K562 (cell line): ENCODE measurements at regions of chr2 and their contacts with region 1.

Region 1: GRCh38 chr2:30711646-30712085 is 95.6 kb downstream of the CAPN13 start:
- DNase-seq: peak; percentile 78 to 91 (median 87)
- ATAC-seq: peak; percentile 90
- H3K4me3 ChIP-seq: no peak overlapping the region
- H3K27ac ChIP-seq: no peak overlapping the region
- H3K4me1 ChIP-seq: peaks cover 0 to 2% of the 10 kb centered on the region in 2 experiments; a peak in 1 of 5 replicates
- H3K27me3 ChIP-seq: peaks cover 4 to 25% of the 10 kb centered on the region in 2 experiments; a peak in 4 of 5 replicates
- CTCF ChIP-seq: peak; percentile 100
- EP300 ChIP-seq: no peak
- POLR2A ChIP-seq: no peak
- RAD21 ChIP-seq: peak; percentile 91 to 98

Region 2: DNA sequence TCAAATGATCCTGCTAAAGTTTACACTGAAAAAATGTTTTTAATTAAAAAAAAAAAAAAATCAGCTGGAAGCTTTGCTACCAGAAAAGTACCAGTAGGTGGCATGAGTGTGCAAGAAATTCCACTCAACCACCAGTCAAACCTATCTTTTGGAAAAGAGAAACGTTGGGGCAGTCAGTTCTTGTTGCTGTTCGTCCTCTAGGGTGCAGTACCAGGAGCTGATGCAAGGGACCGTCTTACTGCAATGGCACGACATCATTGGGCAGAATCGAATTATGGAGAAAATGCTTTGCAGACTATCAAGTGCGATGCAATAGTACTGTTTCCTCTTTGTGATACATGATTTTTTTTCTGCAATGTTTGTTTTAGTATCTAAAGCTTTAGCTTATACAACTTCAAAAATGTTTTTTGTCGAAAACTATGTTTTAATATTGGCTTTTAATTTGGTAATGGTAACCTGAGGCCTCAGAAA is 546.6 kb before region 1 on chr2:
- CTCF ChIA-PET with region 1: interaction called, 68 read pairs
- POLR2A ChIA-PET with region 1: interaction called, 9 read pairs
- in situ Hi-C with region 1: loop called (anchors 5 kb)
- intact Hi-C with region 1: loop called (anchors 1 kb)
- DNase-seq: peak; percentile 88 to 90 (median 90)
- ATAC-seq: peak; percentile 100
- H3K4me3 ChIP-seq: no peak overlapping the region
- H3K27ac ChIP-seq: no peak overlapping the region
- H3K4me1 ChIP-seq: no peaks in the 10 kb centered on the region
- H3K27me3 ChIP-seq: no peaks in the 10 kb centered on the region; a peak in 1 of 5 replicates
- CTCF ChIP-seq: peak; percentile 94 to 99 (median 98)
- EP300 ChIP-seq: 0 out of 2 replicates have a peak, but pooled peaks have one; percentile 32
- POLR2A ChIP-seq: no peak
- RAD21 ChIP-seq: peak; percentile 90 to 92

Region 3: DNA sequence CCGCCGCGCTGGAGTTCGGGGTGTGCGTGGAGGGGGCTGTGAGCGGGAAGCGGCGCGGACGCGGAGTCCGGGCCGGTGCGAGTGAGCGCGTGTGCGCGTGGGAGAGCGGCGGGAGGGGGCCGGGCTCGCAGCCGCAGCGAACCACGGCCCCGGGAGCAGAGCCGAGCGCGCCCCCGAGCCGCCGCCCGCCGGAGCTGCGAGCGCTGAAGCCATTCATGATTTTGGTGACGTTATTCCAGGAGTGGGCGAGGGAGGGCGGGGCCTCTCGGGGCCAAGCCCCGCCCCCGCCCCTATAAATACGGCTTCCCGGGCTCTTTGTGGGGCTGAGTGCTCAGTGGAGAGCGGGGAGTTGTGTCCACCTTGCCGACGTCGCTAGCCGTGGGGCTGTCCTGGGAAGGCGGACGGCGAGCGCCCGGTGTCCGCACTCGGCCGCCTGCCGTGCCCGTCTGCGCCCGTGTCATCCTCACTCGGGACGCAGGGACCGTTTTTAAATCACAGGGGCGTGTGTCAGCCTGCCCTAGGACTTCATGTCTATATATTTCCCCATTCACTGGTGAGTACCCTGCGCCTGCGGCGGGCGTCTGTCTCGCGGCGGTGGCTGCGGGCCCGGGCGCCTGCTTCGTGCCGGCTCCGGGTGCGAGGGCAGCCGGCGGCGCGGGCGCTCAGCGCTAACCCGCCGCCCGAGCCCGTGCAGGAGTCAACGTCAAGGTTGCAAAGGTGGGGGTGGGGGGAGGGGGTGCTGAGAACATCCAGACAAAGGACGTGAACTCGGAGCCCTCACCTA is 480.3 kb before region 1 on chr2 and contains the start of gene LBH:
- CTCF ChIA-PET with region 1: no interaction called
- POLR2A ChIA-PET with region 1: no interaction called
- in situ Hi-C with region 1: no loop called
- intact Hi-C with region 1: loop called (anchors 1 kb)
- DNase-seq: peak; percentile 90 to 95 (median 93)
- ATAC-seq: peak; percentile 86
- H3K4me3 ChIP-seq: peak within 1 kb of the TSS; percentile 61
- H3K27ac ChIP-seq: peak within 1 kb of the TSS; percentile 58
- H3K4me1 ChIP-seq: peaks cover 23 to 33% of the 10 kb centered on the region in 2 experiments; a peak in 4 of 5 replicates
- H3K27me3 ChIP-seq: no peaks in the 10 kb centered on the region
- CTCF ChIP-seq: peak in 1 of 3 experiments; percentile 27; a peak in 2 of 6 replicates
- EP300 ChIP-seq: no peak
- POLR2A ChIP-seq: peak; percentile 94
- RAD21 ChIP-seq: peak in 1 of 2 experiments; percentile 28; a peak in 2 of 4 replicates
- polyA plus RNA-seq, gene LBH: 3.1 to 5.9 TPM

Region 4: DNA sequence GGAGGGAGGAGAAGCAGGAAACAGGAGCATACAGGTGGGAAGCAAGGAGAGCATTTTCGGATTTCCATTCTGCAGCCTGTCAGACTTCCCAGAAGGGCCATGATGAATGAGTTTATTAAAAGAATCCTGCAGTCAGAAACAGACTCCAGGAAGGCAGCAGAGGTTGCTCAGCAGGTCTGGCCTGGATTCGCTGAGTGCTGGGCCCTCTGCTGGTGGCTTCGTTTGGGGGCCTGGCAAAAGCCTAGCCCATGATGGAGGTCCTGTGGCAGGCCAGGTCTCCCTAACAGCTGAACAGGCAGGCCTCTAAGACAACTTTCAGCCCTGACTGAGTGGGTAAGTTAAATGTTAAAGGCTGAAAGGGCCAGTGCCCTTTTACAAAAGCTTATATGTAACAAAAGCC is 203.8 kb after region 1 on chr2:
- CTCF ChIA-PET with region 1: no interaction called
- POLR2A ChIA-PET with region 1: no interaction called
- in situ Hi-C with region 1: no loop called
- intact Hi-C with region 1: loop called (anchors 10 kb)
- DNase-seq: peak in 3 of 4 experiments; percentile 17 to 33 (median 27)
- ATAC-seq: peak; percentile 78
- H3K4me3 ChIP-seq: no peak overlapping the region
- H3K27ac ChIP-seq: no peak overlapping the region
- H3K4me1 ChIP-seq: no peaks in the 10 kb centered on the region
- H3K27me3 ChIP-seq: no peaks in the 10 kb centered on the region; a peak in 1 of 5 replicates
- CTCF ChIP-seq: peak; percentile 41 to 55 (median 52); a peak in 5 of 6 replicates
- EP300 ChIP-seq: no peak
- POLR2A ChIP-seq: no peak
- RAD21 ChIP-seq: peak in 1 of 2 experiments; percentile 35; a peak in 1 of 4 replicates

Region 5: DNA sequence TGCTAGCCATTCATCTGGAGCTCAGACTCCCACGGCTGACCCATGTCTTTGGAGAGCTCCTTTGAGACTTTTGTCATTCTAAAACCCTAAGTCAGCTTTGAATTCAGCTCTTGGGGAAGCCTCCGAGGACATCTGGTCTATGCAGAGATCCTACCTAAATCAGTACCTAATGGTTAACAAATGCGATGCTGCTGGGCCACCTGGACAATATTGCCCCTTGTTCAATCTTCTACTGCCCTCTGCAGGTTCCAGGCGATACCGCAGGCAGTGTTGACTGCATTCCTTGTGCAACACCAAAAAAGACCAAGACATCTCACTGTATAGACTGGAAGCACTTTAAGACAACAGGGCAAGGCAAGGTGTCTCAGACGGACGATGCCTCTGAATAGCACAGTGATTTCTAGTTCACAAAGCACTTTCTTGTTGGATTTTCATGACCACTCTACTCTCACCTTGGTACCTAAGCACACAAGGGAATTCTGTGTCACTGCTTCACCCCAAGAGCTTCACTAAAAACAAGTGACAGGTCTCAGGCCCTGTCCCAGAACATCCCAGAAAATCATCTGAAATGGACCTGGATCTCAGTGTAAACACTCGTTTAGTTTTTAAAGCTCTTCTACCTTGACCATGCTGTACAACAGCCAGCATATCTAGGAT is 622.0 kb after region 1 on chr2:
- CTCF ChIA-PET with region 1: interaction called, 5 read pairs
- POLR2A ChIA-PET with region 1: no interaction called
- in situ Hi-C with region 1: loop called (anchors 10 kb)
- intact Hi-C with region 1: loop called (anchors 1 kb)
- DNase-seq: peak; percentile 62 to 69 (median 62)
- ATAC-seq: peak; percentile 91
- H3K4me3 ChIP-seq: no peak overlapping the region
- H3K27ac ChIP-seq: no peak overlapping the region
- H3K4me1 ChIP-seq: no peaks in the 10 kb centered on the region
- H3K27me3 ChIP-seq: peaks cover 2 to 18% of the 10 kb centered on the region in 2 experiments; a peak in 3 of 5 replicates
- CTCF ChIP-seq: peak; percentile 87 to 89 (median 88)
- EP300 ChIP-seq: no peak
- POLR2A ChIP-seq: no peak
- RAD21 ChIP-seq: peak; percentile 75 to 88